Prostate gland (tissue), 2 donors: ENCODE measurements at regions of chr3 and their contacts with region 1.

Region 1: DNA sequence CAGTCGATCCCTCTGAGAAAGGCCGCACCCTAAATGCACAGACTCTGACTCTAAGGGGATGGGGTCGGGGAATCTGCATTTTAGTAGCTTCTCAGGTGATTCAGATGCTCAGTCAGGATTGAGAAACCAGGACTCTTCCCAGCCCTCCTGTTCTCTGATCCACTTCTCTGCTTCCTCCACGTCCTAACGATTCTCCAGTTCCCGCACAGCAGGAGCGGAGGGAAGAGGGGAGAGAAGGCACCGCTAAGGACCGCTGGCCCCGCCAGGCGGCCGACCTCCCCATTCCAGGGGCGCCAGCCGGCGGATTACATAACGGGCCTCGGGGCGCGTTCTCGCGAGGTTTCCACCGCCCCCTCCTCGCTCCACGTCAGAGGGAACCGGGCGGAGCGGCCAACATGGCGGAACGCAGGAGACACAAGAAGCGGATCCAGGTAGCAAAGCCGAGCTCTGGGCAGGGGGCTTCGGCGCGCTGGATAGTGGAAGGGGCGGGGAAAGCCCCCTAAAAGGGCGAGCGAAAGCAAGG is at the start of gene SEC62:
- DNase-seq: peak; percentile 92
- H3K4me3 ChIP-seq: peak within 1 kb of the TSS; percentile 88 to 94
- H3K27ac ChIP-seq: peak within 1 kb of the TSS; percentile 96 to 98
- H3K4me1 ChIP-seq: no peaks in the 10 kb centered on the region
- H3K27me3 ChIP-seq: no peaks in the 10 kb centered on the region
- CTCF ChIP-seq: peak in 3 of 4 experiments; percentile 29 to 67 (median 57)
- POLR2A ChIP-seq: peak; percentile 69
- total RNA-seq, gene SEC62: 50.4 to 54.0 TPM

Region 2: DNA sequence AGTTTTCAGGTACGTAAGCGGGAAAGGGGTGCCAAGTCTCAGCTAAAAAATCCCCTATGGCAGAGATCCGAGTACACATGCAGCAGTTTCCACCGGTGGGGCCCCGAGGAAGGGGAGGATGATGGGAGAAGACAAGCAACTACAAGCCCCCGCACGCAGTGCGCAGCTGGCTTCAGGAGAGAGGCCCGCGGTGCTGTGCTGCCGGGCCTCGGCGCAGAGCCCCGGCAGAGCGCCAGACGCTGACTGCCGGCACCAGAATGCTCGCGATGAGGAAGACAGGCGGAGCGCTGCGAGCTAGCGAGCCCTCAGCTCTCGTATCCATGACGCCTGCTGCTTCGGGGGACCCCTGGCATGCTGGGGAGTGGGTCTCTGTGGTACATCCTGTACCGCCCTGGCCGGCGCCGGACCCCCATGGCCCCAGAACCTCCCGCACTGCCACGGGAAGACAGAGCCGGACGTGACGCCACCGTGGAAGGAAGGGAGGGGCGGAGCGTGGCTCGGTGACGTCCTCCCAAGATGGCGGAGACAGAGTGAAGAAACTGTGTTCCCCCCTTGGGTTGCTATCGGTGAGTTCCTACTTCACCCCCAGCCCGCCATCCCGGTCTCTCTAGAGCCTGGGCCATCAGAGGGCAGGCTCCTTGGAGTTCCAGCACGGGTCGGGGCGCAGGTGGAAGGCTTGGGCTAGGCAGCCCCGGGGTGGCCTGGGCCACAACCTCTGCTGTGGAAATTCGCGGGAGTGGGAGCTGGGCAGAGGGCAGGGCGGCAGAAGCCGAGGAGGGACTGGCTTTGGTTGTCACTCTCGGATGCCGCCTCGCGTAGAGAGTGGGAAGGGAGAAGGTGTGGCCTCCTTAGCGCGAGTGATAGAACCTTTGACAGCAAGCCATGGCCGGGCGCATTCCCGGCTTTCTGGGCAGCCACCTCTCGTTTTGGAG is 193.3 kb before region 1 on chr3 and contains the start of gene MYNN:
- intact Hi-C with region 1: loop called (anchors 5 kb)
- DNase-seq: peak; percentile 91
- H3K4me3 ChIP-seq: peak within 1 kb of the TSS; percentile 70 to 93
- H3K27ac ChIP-seq: peak within 1 kb of the TSS; percentile 97 to 99
- H3K4me1 ChIP-seq: peaks cover 10% of the 10 kb centered on the region
- H3K27me3 ChIP-seq: no peaks in the 10 kb centered on the region
- CTCF ChIP-seq: no peak
- POLR2A ChIP-seq: peak; percentile 97
- total RNA-seq, gene MYNN: 13.5 to 19.9 TPM

Region 3: DNA sequence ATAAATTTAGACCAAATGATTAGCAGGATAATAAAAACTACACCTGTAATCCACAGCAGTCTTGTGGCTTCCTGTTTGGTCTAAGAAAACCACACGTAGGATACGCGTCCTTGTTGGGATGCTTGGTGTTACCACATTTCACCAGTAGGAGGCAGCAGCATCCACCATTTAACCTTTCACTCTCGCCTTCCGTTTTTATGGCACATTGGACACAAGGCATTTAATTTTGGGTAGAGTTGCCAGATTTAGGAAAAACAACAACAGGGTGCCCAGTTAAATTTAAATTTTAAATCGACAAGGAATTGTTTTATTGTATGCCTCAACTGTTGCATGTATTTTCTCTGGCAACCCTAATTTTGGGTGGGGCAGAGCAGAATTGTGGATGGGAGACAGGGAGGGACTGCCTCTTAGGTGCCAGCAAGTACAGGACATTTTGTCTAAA is 103.0 kb before region 1 on chr3:
- intact Hi-C with region 1: loop called (anchors 5 kb)
- DNase-seq: peak; percentile 62
- H3K4me3 ChIP-seq: no peak overlapping the region
- H3K27ac ChIP-seq: no peak overlapping the region
- H3K4me1 ChIP-seq: no peaks in the 10 kb centered on the region
- H3K27me3 ChIP-seq: no peaks in the 10 kb centered on the region
- CTCF ChIP-seq: peak in 3 of 4 experiments; percentile 84 to 92 (median 91)
- POLR2A ChIP-seq: no peak

Region 4: DNA sequence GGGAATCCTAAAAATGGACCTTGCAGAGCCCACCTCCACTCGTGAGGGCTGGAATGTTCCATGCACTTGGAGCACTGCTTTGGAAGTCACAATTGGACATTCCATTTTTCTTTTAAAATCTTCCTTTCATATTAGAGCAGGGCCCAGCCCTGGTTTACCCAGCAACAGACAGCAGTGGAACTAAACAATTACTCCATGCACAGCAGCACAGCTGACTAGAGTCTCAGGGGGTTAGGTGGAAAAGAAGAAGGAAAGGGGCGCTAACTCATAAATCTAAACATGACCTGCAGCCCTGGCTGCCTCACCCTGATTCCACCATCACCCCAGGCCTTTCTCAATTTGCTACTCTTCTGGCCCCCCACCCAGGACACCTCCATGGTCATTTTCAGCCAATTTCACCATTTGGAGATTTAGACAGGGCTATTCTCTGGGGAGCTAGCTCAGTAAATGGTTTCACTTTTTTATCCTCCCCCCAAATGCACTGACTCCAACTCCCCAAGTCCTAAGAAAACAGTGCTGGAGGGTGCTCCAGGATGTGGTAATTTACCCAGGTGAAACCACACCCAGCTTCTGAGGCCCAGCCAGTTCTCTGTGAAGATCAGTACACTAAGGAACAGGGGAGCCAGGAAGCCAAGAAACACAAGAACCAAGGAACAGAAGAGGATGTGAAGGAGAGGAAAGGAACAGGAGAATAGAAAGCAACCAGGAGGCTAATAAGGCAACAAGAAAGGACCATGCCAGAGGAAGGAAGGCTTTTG is 95.2 kb before region 1 on chr3:
- intact Hi-C with region 1: loop called (anchors 5 kb)
- DNase-seq: peak; percentile 81
- H3K4me3 ChIP-seq: no peak overlapping the region
- H3K27ac ChIP-seq: peak overlapping the region; percentile 64 to 71
- H3K4me1 ChIP-seq: no peaks in the 10 kb centered on the region
- H3K27me3 ChIP-seq: no peaks in the 10 kb centered on the region
- CTCF ChIP-seq: no peak
- POLR2A ChIP-seq: no peak

Region 5: DNA sequence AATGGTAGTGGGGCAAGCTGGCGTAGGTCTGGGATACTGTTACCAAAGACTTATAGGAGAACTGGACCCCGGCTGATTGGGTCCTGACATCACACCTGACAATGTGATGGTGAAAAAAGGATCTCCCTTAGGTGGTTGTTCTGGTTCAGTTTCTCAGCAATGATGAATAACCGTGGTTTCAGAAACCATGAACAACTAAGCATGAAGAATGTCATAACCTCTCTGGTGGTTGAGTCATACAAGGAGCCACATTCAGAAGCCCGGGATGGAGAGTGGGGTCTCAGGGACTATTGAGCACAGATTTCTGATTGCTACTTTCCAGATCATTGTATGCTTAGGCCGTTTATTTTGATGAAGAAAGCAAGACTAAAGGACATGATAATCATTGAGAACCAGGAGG is 88.7 kb after region 1 on chr3:
- intact Hi-C with region 1: no loop called
- DNase-seq: no peak
- H3K4me3 ChIP-seq: no peak overlapping the region
- H3K27ac ChIP-seq: peak overlapping the region in 1 of 2 donors; percentile 38
- H3K4me1 ChIP-seq: peaks cover 3% of the 10 kb centered on the region
- H3K27me3 ChIP-seq: no peaks in the 10 kb centered on the region
- CTCF ChIP-seq: no peak
- POLR2A ChIP-seq: no peak

Region 6: DNA sequence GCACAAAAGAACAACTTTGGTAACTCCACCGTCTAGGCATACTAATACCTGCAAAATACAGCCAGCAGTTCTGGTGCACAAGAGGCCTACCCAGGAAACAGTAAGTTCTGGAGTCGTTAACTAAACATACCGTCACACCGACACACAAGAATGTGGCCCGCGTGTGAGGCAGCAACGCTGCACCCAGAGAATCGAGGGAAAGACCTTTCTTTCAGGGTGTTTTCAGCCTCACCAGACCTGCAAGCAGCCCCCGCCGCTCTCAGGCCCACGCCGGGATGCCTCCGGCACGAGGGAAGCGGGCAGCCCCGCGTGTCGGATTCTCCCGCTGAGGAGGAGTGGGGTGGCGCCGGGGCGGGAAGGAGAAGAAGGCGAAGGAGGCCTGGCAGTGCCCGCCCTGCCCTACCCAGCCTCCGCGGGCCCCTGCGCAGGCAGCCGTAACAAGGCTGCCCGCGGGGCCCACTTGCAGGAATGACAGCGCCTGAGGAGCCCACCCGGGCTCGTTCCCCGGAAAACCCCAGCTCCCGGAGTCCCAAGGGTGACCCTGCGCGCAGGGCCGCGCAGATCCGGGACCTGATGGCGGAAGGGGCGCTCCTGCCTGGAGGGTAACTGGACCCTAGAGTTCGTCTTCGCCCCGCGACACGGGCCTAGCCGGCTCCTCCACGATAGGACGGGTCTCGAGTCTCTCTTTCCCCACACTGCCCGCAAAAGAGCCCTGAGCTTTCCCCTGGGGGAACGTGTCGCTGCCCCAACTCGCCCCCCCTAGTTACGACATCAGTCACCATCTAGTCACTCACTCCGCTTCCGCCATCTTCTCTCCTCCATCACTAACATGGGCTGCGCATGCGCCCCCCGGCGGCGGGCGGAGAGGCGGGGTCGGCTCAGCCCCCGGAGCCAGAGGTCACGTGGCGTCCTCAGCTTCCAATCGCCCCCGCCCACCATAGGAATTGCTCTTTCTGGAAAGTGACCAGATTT is 214.7 kb after region 1 on chr3 and contains the start of gene PHC3:
- intact Hi-C with region 1: loop called (anchors 10 kb)
- DNase-seq: peak; percentile 90
- H3K4me3 ChIP-seq: peak within 1 kb of the TSS; percentile 68 to 83
- H3K27ac ChIP-seq: peak within 1 kb of the TSS; percentile 94 to 97
- H3K4me1 ChIP-seq: no peaks in the 10 kb centered on the region
- H3K27me3 ChIP-seq: no peaks in the 10 kb centered on the region
- CTCF ChIP-seq: peak in 3 of 4 experiments; percentile 46 to 72 (median 55)
- POLR2A ChIP-seq: peak; percentile 73
- total RNA-seq, gene PHC3: 34.5 to 100 TPM